B cell (primary cell): ENCODE measurements at regions of chr4 and their contacts with region 1.

Region 1: DNA sequence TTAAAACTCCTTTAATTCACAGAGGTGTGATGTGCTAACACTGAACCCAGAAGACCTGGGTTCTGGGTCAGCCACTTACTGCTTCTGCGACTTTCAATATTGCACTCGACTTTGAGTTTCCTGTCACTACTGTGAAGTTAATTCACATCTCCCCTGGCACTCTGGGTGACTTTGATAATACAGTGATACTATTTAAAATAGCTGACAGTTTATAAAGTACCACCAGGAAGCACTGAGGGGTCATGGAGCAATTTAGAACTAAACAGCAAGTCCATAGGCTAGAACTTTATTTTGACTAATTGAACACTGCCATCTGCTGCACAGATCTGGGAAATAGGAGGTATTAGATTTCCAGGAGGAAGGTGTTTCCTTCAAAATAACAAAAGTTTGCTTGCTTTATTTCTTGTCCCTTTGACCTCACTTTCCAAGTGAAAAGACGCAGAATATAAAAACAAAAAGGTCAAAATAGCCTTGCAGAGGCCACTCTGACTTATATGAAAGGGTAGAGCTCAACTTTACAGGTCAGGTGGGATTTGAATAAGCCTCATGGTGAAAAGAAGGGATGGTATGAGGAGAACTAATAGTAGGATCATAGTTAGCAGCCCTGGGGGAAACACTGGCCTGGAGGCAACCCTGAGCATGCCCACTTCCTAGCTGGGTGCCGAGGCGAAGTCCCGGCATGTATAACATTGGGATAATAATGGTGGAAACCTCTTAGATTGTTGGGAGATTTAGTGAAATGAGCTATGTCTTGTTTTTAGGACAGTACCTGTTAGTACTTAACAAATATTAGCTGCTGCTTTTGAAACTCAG is 53.4 kb downstream of the ZNF518B start:
- DNase-seq: peak; percentile 16
- ATAC-seq: no peak
- H3K4me3 ChIP-seq: no peak overlapping the region
- H3K4me3 Mint-ChIP-seq: no peak overlapping the region
- H3K27ac ChIP-seq: no peak overlapping the region
- H3K27ac Mint-ChIP-seq: no peak overlapping the region
- H3K4me1 ChIP-seq: no peaks in the 10 kb centered on the region
- H3K4me1 Mint-ChIP-seq: no peaks in the 10 kb centered on the region
- H3K27me3 ChIP-seq: peaks cover 0 to 4% (median 0%) of the 10 kb centered on the region in 4 experiments
- H3K27me3 Mint-ChIP-seq: peaks cover 15% of the 10 kb centered on the region
- CTCF ChIP-seq: peak; percentile 34

Region 2: DNA sequence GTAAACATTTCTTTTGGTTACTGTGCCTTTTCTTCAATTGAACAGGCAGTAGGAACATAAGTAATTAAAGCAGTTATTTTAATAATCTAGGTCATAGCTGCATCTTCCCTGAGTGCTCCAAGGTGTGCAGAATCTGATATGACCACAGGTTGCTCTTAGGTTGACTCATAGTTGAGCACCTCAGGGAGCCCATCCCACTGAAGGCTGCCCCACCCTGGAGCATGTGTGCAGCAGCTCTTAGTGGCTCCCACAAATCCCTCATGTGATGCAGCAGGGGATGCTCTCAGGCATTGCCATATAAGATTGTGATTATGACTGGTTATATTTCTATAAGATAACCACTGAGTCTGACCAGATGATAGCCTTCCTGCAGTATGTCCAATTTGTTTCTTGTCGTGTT is 18.9 kb before region 1 on chr4:
- CTCF ChIA-PET with region 1: interaction called, 13 read pairs
- POLR2A ChIA-PET with region 1: no interaction called
- intact Hi-C with region 1: loop called (anchors 1 kb)
- DNase-seq: no peak
- ATAC-seq: no peak
- H3K4me3 ChIP-seq: no peak overlapping the region
- H3K4me3 Mint-ChIP-seq: no peak overlapping the region
- H3K27ac ChIP-seq: no peak overlapping the region
- H3K27ac Mint-ChIP-seq: no peak overlapping the region
- H3K4me1 ChIP-seq: no peaks in the 10 kb centered on the region
- H3K4me1 Mint-ChIP-seq: no peaks in the 10 kb centered on the region
- H3K27me3 ChIP-seq: peaks cover 0 to 3% (median 0%) of the 10 kb centered on the region in 4 experiments
- H3K27me3 Mint-ChIP-seq: peaks cover 3% of the 10 kb centered on the region
- CTCF ChIP-seq: no peak